Natural killer cell (primary cell): ENCODE measurements at regions of chr3 and their contacts with region 1.

Region 1: GRCh38 chr3:157174649-157175498 is 14.9 kb upstream of the CCNL1 start:
- DNase-seq: peak; percentile 94 to 100
- ATAC-seq: peak; percentile 93 to 98 (median 93)
- H3K4me3 ChIP-seq: peak overlapping the region; percentile 64
- H3K4me3 Mint-ChIP-seq: peak overlapping the region; percentile 94
- H3K27ac ChIP-seq: peak overlapping the region; percentile 93
- H3K27ac Mint-ChIP-seq: peak overlapping the region; percentile 94 to 100
- H3K4me1 ChIP-seq: peaks cover 14% of the 10 kb centered on the region
- H3K4me1 Mint-ChIP-seq: peaks cover 21% of the 10 kb centered on the region in 2 donors
- H3K27me3 ChIP-seq: no peaks in the 10 kb centered on the region
- H3K27me3 Mint-ChIP-seq: peaks cover 9 to 10% of the 10 kb centered on the region in 2 donors
- CTCF ChIP-seq: no peak

Region 2: GRCh38 chr3:157159762-157160657 is 14.9 kb before region 1 on chr3 and contains the start of gene CCNL1:
- intact Hi-C with region 1: loop called (anchors 1 kb)
- DNase-seq: peak; percentile 98 to 99
- ATAC-seq: peak; percentile 74 to 92 (median 80)
- H3K4me3 ChIP-seq: peak within 1 kb of the TSS; percentile 94
- H3K4me3 Mint-ChIP-seq: peak within 1 kb of the TSS; percentile 95
- H3K27ac ChIP-seq: peak within 1 kb of the TSS; percentile 97
- H3K27ac Mint-ChIP-seq: peak within 1 kb of the TSS; percentile 97 to 99
- H3K4me1 ChIP-seq: peaks cover 16% of the 10 kb centered on the region
- H3K4me1 Mint-ChIP-seq: peaks cover 56 to 62% of the 10 kb centered on the region in 2 donors
- H3K27me3 ChIP-seq: no peaks in the 10 kb centered on the region
- H3K27me3 Mint-ChIP-seq: no peaks in the 10 kb centered on the region
- CTCF ChIP-seq: no peak
- total RNA-seq, gene CCNL1: 1,104 to 1,331 (median 1,220) TPM

Region 3: DNA sequence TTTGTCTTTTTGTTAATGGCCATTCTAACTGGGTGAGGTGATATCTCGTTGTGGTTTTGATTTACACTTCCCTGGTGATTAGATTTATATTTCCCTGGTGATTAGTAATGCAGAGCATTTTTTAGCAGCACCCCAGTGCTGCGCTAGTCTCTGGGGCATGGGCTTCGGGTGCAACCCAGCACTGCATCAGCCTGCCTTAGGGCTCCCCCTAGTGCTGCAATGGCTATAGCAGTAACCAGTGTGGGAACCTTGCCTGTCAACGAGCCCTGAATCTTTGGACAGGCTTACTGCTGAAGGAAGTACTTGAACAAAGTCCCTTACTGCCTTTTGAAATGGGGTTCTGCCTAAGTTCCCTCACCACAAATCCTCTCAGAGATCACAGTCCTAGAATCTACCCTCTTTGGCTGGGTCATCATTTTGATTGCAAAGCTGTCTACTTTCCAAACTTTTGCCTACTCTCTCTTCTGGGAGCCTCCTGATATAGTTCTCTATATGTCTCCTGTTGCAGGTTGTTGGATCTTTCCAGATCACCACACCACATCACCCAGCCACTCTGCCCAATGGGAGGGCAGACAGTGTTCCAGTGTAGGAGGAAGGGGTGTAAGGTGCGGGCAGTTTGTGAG is 64.3 kb after region 1 on chr3:
- intact Hi-C with region 1: loop called (anchors 2 kb)
- DNase-seq: peak; percentile 37 to 82
- ATAC-seq: peak; percentile 96 to 99 (median 99)
- H3K4me3 ChIP-seq: no peak overlapping the region
- H3K4me3 Mint-ChIP-seq: no peak overlapping the region
- H3K27ac ChIP-seq: no peak overlapping the region
- H3K27ac Mint-ChIP-seq: no peak overlapping the region
- H3K4me1 ChIP-seq: no peaks in the 10 kb centered on the region
- H3K4me1 Mint-ChIP-seq: peaks cover 5 to 6% of the 10 kb centered on the region in 2 donors
- H3K27me3 ChIP-seq: no peaks in the 10 kb centered on the region
- H3K27me3 Mint-ChIP-seq: peaks cover 0 to 3% of the 10 kb centered on the region in 2 donors
- CTCF ChIP-seq: peak; percentile 62